ENCODE measurements at regions of chr2 and their contacts with region 1.

Region 1: GRCh38 chr2:172370821-172371455 is 56.4 kb upstream of the ITGA6 start:
- DNase-seq: no peak
- H3K4me3 Mint-ChIP-seq: no peak overlapping the region
- H3K27ac Mint-ChIP-seq: no peak overlapping the region
- H3K4me1 Mint-ChIP-seq: no peaks in the 10 kb centered on the region
- H3K27me3 Mint-ChIP-seq: peaks cover 16% of the 10 kb centered on the region

Region 2: DNA sequence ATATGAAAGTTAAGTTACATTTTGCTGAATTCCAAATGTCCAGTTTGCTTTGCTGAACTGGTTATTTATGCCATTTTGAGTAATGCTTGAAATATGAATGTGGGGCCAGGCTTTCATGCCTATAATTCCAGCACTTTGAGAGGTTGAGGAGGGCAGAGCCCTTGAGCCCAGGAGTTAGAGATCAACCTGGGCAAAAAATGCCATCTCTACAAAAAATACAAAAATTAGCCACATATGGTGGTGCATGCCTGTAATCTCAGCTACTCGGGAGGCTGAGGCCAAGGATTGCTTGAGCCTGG is 44.8 kb before region 1 on chr2:
- intact Hi-C with region 1: loop called (anchors 1 kb)
- DNase-seq: no peak
- H3K4me3 Mint-ChIP-seq: no peak overlapping the region
- H3K27ac Mint-ChIP-seq: no peak overlapping the region
- H3K4me1 Mint-ChIP-seq: no peaks in the 10 kb centered on the region
- H3K27me3 Mint-ChIP-seq: peaks cover 2% of the 10 kb centered on the region

Region 3: GRCh38 chr2:173373290-173373689 is 1002.4 kb after region 1 on chr2:
- intact Hi-C with region 1: no loop called
- DNase-seq: no peak
- H3K4me3 Mint-ChIP-seq: no peak overlapping the region
- H3K27ac Mint-ChIP-seq: no peak overlapping the region
- H3K4me1 Mint-ChIP-seq: peaks cover 23% of the 10 kb centered on the region
- H3K27me3 Mint-ChIP-seq: no peaks in the 10 kb centered on the region

Measured in activated T-helper 1 cell treated with anti-CD3 and anti-CD28 coated beads, Interleukin-12 subunit alpha, Interleukin-12 subunit beta, Interleukin-2, Interleukin-4 antibody, amounts not matched to agents 30 ng/mL and 10 ng/mL and 1 ng/mL, durations not matched to agents 14 hours and 24 hours and 36 hours (primary cell).